Gastrocnemius medialis (tissue), 4 donors: ENCODE measurements at regions of chr19 and their contacts with region 1.

Region 1: DNA sequence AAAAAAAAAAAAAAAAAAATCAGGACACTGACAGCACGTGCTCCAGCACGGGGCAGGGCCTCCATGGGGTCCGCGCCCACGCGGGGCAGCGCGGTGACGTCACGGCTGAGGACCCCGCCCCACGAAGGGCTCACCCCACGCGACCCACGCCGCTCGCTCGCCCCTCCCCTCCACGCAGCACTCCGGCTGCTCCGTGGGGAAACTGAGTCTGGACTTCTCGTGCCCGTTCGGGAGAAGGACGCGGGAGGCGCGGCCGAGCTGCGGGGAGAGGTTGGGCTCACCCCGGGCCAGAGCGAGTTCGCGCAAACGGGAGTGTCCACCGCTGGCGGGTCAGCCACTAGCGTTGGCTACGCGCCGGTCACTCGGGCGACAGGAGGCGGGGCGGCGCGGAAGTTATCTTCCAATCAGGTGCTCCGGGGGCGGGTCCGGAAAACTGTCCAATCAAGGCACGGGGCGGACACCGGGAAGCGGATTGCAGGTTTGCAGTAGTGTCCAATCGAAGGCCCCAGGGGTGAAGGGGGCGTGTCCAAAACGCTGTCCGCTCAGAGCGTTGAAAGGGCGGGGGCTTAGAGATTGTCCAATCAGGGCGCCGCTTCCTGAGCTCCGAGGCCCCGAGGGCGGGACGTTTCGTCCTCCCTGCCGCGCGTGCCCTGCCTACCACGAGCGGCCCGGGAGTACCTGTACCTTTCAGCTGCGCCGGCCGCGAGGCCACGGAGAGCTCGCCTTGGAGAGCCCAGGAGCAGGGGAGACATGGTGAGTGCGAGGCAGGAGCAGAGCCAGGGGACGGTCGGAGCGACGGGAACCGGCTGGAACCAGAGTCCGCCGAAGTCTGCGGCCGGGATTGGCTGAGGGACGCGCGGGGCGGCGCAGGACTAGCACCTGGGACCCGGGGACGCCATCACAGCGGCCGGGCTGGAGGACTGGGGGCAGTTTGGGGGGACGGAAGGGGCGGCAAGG is at the start of gene ZNF57:
- DNase-seq: peak; percentile 99
- ATAC-seq: peak; percentile 100
- H3K4me3 ChIP-seq: peak within 1 kb of the TSS; percentile 71 to 88 (median 84)
- H3K27ac ChIP-seq: peak within 1 kb of the TSS; percentile 71 to 82 (median 76)
- H3K4me1 ChIP-seq: peaks cover 8 to 10% of the 10 kb centered on the region in 2 donors
- H3K27me3 ChIP-seq: no peaks in the 10 kb centered on the region
- CTCF ChIP-seq: no peak
- POLR2A ChIP-seq: peak; percentile 42 to 52
- total RNA-seq, gene ZNF57: 0.44 to 2.1 (median 0.83) TPM

Region 2: DNA sequence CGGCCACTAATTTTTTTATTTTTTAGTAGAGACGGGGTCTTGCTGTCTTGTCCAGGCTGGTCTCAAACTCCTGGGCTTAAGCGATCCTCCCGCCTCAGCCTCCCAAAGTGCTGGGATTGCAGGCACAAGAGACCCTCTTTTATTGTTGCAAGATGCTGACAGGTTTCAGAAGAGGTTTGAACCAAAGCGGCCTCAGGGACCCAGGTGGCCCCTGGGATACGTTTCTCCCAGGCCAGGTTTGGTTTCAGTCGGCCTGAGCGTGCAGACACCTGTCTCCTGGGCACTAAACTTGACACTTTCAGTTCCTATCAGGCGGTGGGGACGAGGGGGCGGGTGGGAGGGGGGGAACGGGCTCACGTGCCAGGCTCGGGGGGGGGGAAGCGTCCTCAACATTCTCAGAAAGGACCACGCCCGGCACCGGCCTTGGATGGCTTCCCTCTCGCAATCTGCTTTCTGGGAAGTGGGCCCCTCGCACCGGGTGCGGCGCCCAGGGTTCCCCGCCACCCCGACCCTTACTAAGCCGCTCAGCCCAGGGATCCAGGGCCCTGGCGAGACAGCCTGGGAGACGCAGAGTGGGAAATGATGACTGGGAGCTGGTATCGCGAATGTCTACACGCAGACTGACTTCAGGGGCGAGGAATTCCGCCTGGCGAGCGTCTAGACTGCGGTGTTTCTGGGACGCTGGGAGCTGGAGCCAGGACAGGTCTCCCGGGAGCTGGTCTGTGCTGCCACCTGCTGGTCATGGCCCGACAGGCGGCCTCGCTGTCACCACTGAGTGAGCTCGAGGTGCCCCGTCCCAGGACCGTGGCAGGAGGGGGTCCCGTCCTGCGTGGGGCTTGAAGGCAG is 289.7 kb before region 1 on chr19:
- in situ Hi-C with region 1: no loop called
- intact Hi-C with region 1: no loop called
- DNase-seq: peak; percentile 80 to 83
- ATAC-seq: peak; percentile 95 to 96
- H3K4me3 ChIP-seq: peak overlapping the region; percentile 52 to 88 (median 64)
- H3K27ac ChIP-seq: peak overlapping the region; percentile 72 to 84 (median 84)
- H3K4me1 ChIP-seq: no peaks in the 10 kb centered on the region
- H3K27me3 ChIP-seq: no peaks in the 10 kb centered on the region
- CTCF ChIP-seq: peak; percentile 94 to 99 (median 99)
- POLR2A ChIP-seq: peak in 1 of 2 donors; percentile 13

Region 3: GRCh38 chr19:2678043-2678671 is 222.4 kb before region 1 on chr19:
- in situ Hi-C with region 1: no loop called
- intact Hi-C with region 1: no loop called
- DNase-seq: no peak
- ATAC-seq: no peak
- H3K4me3 ChIP-seq: no peak overlapping the region
- H3K27ac ChIP-seq: no peak overlapping the region
- H3K4me1 ChIP-seq: no peaks in the 10 kb centered on the region
- H3K27me3 ChIP-seq: no peaks in the 10 kb centered on the region
- CTCF ChIP-seq: no peak
- POLR2A ChIP-seq: no peak

Region 4: GRCh38 chr19:2846180-2846894 is 54.2 kb before region 1 on chr19:
- in situ Hi-C with region 1: no loop called
- intact Hi-C with region 1: loop called (anchors 2 kb)
- DNase-seq: peak; percentile 27 to 28
- ATAC-seq: peak; percentile 70 to 72
- H3K4me3 ChIP-seq: peak overlapping the region in 1 of 4 donors; percentile 2
- H3K27ac ChIP-seq: peak overlapping the region; percentile 36 to 79 (median 59)
- H3K4me1 ChIP-seq: peaks cover 16 to 25% of the 10 kb centered on the region in 2 donors
- H3K27me3 ChIP-seq: no peaks in the 10 kb centered on the region
- CTCF ChIP-seq: no peak
- POLR2A ChIP-seq: no peak